ENCODE measurements at regions of chr14 and their contacts with region 1.

Region 1: GRCh38 chr14:22570132-22570949 is 18.7 kb downstream of the DAD1 start:
- DNase-seq: peak; percentile 84
- ATAC-seq: peak; percentile 99
- H3K4me3 Mint-ChIP-seq: no peak overlapping the region
- H3K27ac Mint-ChIP-seq: peak overlapping the region; percentile 99
- H3K4me1 Mint-ChIP-seq: peaks cover 17% of the 10 kb centered on the region
- H3K27me3 Mint-ChIP-seq: no peaks in the 10 kb centered on the region
- CTCF ChIP-seq: peak; percentile 93

Region 2: DNA sequence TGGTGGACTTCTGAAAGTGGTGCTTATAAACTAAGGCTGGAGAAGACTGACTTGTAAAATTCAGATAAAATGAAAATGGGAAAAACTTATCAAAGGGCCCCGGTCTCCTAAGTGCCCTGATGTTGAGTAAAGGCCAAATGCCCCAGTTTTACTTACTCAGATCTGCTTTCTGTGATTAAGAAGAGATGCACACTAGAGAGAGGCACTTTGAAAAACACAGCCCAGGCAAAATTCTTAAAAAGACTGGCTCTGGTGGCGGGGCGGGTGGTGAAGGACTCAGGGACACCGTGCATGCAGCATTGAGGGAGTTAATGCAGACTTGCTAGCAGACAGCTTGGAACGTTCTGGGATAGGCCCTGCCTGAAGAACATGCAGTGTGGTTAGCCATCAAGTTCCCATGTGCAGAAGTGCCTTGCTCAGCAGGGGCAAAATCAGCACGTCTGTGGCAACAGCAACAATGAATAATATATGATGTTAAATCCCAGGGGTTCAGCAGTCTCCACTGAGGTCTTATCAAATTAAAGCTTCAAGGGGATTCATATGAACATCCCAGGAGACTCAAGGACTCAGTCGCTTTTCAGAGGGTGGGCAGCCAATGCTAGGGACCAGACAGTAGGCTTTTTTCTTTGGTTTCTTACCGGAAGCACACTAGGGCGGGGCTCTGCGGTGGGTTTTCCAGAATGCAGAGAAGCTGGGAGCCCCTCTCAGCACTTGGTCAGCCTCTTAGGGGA is 86.3 kb before region 1 on chr14:
- CTCF ChIA-PET with region 1: interaction called, 13 read pairs
- POLR2A ChIA-PET with region 1: no interaction called
- DNase-seq: no peak
- ATAC-seq: no peak
- H3K4me3 Mint-ChIP-seq: no peak overlapping the region
- H3K27ac Mint-ChIP-seq: no peak overlapping the region
- H3K4me1 Mint-ChIP-seq: peaks cover 44% of the 10 kb centered on the region
- H3K27me3 Mint-ChIP-seq: no peaks in the 10 kb centered on the region; the same call in 1 of the 2 replicates
- CTCF ChIP-seq: no peak

Region 3: GRCh38 chr14:22583994-22584393 is 13.7 kb after region 1 on chr14:
- CTCF ChIA-PET with region 1: interaction called, 112 read pairs
- POLR2A ChIA-PET with region 1: interaction called, 7 read pairs
- DNase-seq: no peak
- ATAC-seq: no peak
- H3K4me3 Mint-ChIP-seq: no peak overlapping the region
- H3K27ac Mint-ChIP-seq: no peak overlapping the region
- H3K4me1 Mint-ChIP-seq: peaks cover 13% of the 10 kb centered on the region
- H3K27me3 Mint-ChIP-seq: peaks cover under 1% of the 10 kb centered on the region
- CTCF ChIP-seq: no peak

Region 4: DNA sequence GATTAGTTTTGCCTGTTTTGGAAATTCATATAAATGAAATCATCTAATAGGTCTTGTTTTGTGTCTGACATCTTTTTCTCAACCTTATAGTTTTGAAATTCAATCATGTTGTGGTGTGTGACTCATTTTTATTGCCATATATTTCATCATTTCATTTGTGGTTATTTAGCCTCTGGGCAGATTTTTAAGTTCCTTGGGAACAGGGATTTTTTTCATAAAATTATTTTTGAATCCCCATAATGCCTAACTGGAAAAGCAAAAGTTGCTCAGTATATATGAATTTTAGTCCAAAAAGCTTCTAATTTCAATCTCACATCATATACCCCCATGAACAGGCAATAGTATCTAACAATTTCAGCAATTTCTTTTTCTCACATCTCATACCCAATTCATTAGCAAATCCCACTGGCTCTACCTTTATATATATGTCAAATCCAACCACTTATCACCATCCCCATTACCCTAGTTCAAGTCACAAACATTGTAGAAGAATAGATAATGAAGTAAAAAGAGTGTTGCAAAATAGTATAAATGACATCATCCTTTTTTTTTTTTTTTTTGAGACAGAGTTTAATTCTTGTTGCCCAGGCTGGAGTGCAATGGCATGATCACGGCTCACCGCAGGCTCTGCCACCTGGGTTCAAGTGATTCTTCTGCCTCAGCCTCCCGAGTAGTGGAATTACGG is 76.4 kb after region 1 on chr14:
- CTCF ChIA-PET with region 1: interaction called, 90 read pairs
- POLR2A ChIA-PET with region 1: no interaction called
- DNase-seq: no peak
- ATAC-seq: no peak
- H3K4me3 Mint-ChIP-seq: no peak overlapping the region
- H3K27ac Mint-ChIP-seq: no peak overlapping the region
- H3K4me1 Mint-ChIP-seq: no peaks in the 10 kb centered on the region
- H3K27me3 Mint-ChIP-seq: no peaks in the 10 kb centered on the region; the same call in 1 of the 2 replicates
- CTCF ChIP-seq: no peak

Region 5: DNA sequence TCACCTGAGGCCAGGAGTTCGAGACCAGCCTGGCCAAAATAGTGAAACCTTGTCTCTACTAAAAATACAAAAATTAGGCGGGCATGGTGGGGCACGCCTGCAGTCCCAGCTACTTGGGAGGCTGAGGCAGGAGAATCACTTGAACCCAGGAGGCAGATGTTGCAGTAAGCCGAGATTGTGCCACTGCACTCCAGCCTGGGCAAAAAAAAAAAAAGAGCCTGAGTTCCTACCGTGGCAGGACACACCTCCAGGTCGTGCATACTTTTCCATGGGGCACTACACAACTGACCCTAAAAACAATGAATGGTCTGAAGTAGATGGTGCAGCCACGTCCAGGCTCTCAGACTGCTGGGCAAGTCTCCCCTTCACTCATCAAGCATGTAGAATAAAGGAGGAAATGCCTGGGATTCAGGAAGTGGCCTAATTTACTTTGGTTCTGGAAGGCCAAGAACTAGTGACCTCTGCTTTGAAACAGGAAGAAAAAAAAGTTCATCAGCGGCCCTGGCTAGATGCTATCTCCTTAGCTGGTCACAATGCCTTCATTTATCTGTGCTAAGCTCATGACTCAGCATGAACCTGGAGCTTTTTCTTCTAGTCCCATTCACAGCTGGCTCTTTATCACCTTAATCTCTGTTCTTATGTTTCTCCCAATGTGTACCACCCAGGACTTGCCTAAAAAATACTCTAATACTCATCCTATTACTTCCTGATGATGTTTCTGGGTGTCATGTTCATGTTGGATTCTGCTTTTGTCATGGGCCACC is 129.6 kb after region 1 on chr14:
- CTCF ChIA-PET with region 1: no interaction called
- POLR2A ChIA-PET with region 1: no interaction called
- DNase-seq: no peak
- ATAC-seq: no peak
- H3K4me3 Mint-ChIP-seq: no peak overlapping the region
- H3K27ac Mint-ChIP-seq: no peak overlapping the region
- H3K4me1 Mint-ChIP-seq: no peaks in the 10 kb centered on the region
- H3K27me3 Mint-ChIP-seq: peaks cover 18% of the 10 kb centered on the region
- CTCF ChIP-seq: no peak

Region 6: GRCh38 chr14:22778084-22778483 is 207.7 kb after region 1 on chr14:
- CTCF ChIA-PET with region 1: interaction called, 13 read pairs
- POLR2A ChIA-PET with region 1: no interaction called
- DNase-seq: no peak
- ATAC-seq: no peak
- H3K4me3 Mint-ChIP-seq: no peak overlapping the region
- H3K27ac Mint-ChIP-seq: no peak overlapping the region
- H3K4me1 Mint-ChIP-seq: peaks cover 5% of the 10 kb centered on the region; the same call in 1 of the 2 replicates
- H3K27me3 Mint-ChIP-seq: no peaks in the 10 kb centered on the region
- CTCF ChIP-seq: no peak

Region 7: DNA sequence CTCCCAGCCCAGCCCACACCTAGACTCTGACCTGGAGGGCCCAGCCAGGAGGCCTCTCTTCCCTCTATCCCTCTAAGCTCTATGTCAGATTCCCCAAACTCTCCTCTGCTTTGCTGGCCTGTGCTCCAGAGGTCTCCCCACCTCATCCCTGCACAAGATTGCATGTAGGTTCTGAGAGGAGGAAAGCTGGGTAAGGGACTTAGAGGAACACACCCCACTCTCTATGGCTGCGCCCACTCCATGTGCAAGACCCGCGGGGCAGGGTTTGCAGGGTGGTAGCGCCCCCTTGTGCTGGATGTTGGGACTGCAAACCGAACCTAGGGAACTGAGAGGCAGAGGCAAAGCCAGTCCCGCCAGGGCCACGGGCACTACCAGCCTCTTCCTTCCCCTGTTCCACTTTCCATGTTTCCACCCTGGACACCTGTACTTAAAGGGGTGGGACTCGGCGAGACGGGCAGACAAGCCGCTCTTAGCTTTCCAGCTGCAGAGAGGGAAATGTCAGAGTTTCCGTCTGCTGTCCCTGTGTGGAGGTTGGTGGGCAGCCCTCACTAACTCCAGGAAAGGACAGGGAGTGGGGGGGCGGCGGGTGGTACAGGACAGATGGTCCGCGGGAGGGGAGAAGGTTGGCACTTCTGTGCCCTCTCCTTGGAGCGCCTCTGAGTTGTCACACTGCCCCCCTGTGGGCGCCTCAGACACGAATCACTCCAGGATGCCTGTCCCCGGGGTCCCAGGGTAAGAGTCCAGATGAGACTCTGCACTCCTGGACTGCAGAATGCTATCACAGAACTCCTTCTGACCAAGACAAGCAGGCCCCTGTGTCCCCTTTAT is 282.8 kb after region 1 on chr14:
- CTCF ChIA-PET with region 1: interaction called, 30 read pairs
- POLR2A ChIA-PET with region 1: no interaction called
- DNase-seq: peak; percentile 98
- ATAC-seq: peak; percentile 85
- H3K4me3 Mint-ChIP-seq: peak overlapping the region; percentile 68
- H3K27ac Mint-ChIP-seq: peak overlapping the region; percentile 87
- H3K4me1 Mint-ChIP-seq: peaks cover 18% of the 10 kb centered on the region
- H3K27me3 Mint-ChIP-seq: no peaks in the 10 kb centered on the region
- CTCF ChIP-seq: peak; percentile 100

Region 8: GRCh38 chr14:22900081-22900799 is 329.9 kb after region 1 on chr14:
- CTCF ChIA-PET with region 1: interaction called, 14 read pairs
- POLR2A ChIA-PET with region 1: no interaction called
- DNase-seq: peak; percentile 28
- ATAC-seq: peak; percentile 79
- H3K4me3 Mint-ChIP-seq: no peak overlapping the region
- H3K27ac Mint-ChIP-seq: no peak overlapping the region
- H3K4me1 Mint-ChIP-seq: peaks cover 8% of the 10 kb centered on the region
- H3K27me3 Mint-ChIP-seq: peaks cover 49% of the 10 kb centered on the region
- CTCF ChIP-seq: 0 out of 2 replicates have a peak, but pooled peaks have one; percentile 27